HEK293T (cell line): ENCODE measurements at regions of chr19 and their contacts with region 1.

Region 1: GRCh38 chr19:49009828-49010227 is 7.1 kb downstream of the LHB start:
- DNase-seq: no peak

Region 2: GRCh38 chr19:48999481-49000325 is 10.1 kb before region 1 on chr19:
- CTCF ChIA-PET with region 1: interaction called, 16 read pairs
- POLR2A ChIA-PET with region 1: interaction called, 3 read pairs
- DNase-seq: peak; percentile 72

Region 3: DNA sequence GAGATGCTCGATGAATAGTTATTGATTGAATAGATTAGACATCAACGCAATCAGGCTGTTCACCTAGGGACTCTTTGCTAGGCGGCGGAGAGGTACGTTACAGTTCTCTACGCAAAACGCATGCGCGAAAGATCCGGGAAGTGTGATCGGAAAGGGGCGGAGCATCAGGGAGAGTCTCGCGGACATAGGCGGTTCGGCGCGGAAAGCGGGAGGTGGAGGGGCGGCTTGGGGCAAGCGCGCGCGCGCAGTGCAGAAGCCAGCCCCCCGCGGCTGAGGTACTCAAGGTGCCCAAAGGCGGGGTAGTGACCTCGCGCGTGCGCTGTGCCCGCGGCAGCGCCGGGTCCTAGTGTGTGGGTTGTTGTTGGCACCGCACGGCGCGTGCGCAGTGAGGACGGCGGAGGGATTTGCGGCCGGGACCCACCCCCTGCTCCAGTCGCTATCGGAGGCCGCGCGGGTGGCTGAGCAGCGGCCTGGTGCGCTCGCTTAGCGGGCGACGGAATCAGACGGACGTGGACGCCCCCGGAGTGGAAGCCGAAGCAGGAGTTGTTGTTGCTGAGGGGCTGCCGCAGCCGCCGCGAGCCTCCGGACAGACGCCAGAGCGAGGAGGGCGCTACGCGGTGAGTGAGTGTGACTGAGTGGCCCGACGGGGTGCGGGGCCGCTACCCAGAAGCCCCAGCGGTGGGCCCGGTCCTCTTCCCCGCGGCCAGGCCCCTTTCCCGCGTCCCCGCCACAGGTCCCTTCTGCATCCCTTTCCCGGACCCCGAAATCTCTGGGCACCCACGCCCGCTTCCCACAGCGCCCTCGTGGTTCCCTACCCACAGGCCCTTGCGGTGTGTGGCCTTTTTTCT is 75.4 kb after region 1 on chr19 and contains the start of gene SNRNP70:
- CTCF ChIA-PET with region 1: no interaction called
- POLR2A ChIA-PET with region 1: no interaction called
- DNase-seq: peak; percentile 99